Caco-2 (cell line): ENCODE measurements at regions of chr13 and their contacts with region 1.

Region 1: DNA sequence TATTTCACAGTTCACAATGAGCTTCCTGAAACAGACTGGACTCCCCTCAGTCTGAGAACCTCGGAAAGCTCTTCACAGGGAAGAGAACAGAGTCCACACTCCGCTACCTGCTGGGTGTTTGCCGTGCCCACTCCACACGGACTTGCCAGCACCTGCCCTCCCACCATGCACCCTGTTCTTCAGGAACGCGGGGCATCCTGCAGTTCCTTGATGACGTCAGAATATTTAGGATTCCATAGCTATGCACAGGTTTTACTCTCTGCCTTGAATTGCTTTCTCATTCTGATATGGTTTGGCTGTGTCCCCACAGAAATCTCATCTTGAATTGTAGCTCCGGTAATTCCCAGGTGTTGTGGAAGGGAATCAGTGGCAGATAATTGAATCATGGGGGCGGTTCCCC is 74.4 kb upstream of the FARP1 start:
- DNase-seq: peak; percentile 57 to 76
- H3K4me3 ChIP-seq: no peak overlapping the region
- H3K4me3 Mint-ChIP-seq: peak overlapping the region; percentile 65
- H3K27ac Mint-ChIP-seq: peak overlapping the region; percentile 76
- H3K4me1 ChIP-seq: peaks cover 8% of the 10 kb centered on the region; the same call in 1 of the 2 replicates
- H3K4me1 Mint-ChIP-seq: peaks cover 25% of the 10 kb centered on the region
- H3K27me3 ChIP-seq: no peaks in the 10 kb centered on the region
- H3K27me3 Mint-ChIP-seq: no peaks in the 10 kb centered on the region
- CTCF ChIP-seq: no peak

Region 2: GRCh38 chr13:98103942-98104880 is 35.7 kb after region 1 on chr13:
- CTCF ChIA-PET with region 1: no interaction called
- POLR2A ChIA-PET with region 1: no interaction called
- intact Hi-C with region 1: loop called (anchors 1 kb)
- DNase-seq: peak; percentile 23 to 36
- H3K4me3 ChIP-seq: no peak overlapping the region
- H3K4me3 Mint-ChIP-seq: no peak overlapping the region
- H3K27ac Mint-ChIP-seq: no peak overlapping the region
- H3K4me1 ChIP-seq: no peaks in the 10 kb centered on the region
- H3K4me1 Mint-ChIP-seq: no peaks in the 10 kb centered on the region
- H3K27me3 ChIP-seq: no peaks in the 10 kb centered on the region
- H3K27me3 Mint-ChIP-seq: no peaks in the 10 kb centered on the region
- CTCF ChIP-seq: peak; percentile 45 to 57

Region 3: DNA sequence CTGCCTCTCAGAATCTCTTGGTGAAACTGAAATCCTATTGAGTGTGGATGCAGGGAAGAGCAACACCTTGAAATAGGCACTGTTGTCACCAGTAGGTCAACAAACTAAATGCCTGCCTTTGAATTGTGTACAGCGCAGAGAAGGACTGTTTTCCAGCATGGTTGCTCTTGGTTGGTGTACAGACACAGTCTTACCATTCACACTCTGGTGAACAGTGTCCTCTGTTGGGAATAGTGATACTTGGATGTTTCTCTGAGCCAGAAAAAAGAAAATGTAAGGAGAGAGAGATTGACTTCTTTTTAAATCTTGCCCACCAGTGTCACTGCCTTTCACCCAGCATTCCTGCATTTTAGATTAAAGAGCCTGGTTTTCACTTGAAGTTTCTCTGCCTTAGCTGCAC is 328.7 kb after region 1 on chr13:
- CTCF ChIA-PET with region 1: no interaction called
- POLR2A ChIA-PET with region 1: no interaction called
- intact Hi-C with region 1: loop called (anchors 10 kb)
- DNase-seq: no peak
- H3K4me3 ChIP-seq: no peak overlapping the region
- H3K4me3 Mint-ChIP-seq: no peak overlapping the region
- H3K27ac Mint-ChIP-seq: no peak overlapping the region
- H3K4me1 ChIP-seq: peaks cover 8% of the 10 kb centered on the region
- H3K4me1 Mint-ChIP-seq: no peaks in the 10 kb centered on the region
- H3K27me3 ChIP-seq: no peaks in the 10 kb centered on the region
- H3K27me3 Mint-ChIP-seq: no peaks in the 10 kb centered on the region
- CTCF ChIP-seq: peak in 1 of 2 experiments; percentile 47